CD14-positive monocyte (primary cell): ENCODE measurements at regions of chr22 and their contacts with region 1.

Region 1: GRCh38 chr22:37933711-37934376 is 19.6 kb downstream of the C22orf23 start:
- DNase-seq: peak; percentile 79 to 97 (median 91)
- H3K4me3 ChIP-seq: no peak overlapping the region
- H3K4me3 Mint-ChIP-seq: no peak overlapping the region
- H3K27ac ChIP-seq: no peak overlapping the region
- H3K27ac Mint-ChIP-seq: peak overlapping the region in 4 of 7 donors; percentile 40 to 69 (median 54)
- H3K4me1 ChIP-seq: peaks cover 6 to 8% of the 10 kb centered on the region in 2 donors
- H3K4me1 Mint-ChIP-seq: peaks cover 10% of the 10 kb centered on the region
- H3K27me3 ChIP-seq: no peaks in the 10 kb centered on the region
- H3K27me3 Mint-ChIP-seq: peaks cover 0 to 3% (median 0%) of the 10 kb centered on the region in 3 donors
- CTCF ChIP-seq: peak; percentile 94

Region 2: DNA sequence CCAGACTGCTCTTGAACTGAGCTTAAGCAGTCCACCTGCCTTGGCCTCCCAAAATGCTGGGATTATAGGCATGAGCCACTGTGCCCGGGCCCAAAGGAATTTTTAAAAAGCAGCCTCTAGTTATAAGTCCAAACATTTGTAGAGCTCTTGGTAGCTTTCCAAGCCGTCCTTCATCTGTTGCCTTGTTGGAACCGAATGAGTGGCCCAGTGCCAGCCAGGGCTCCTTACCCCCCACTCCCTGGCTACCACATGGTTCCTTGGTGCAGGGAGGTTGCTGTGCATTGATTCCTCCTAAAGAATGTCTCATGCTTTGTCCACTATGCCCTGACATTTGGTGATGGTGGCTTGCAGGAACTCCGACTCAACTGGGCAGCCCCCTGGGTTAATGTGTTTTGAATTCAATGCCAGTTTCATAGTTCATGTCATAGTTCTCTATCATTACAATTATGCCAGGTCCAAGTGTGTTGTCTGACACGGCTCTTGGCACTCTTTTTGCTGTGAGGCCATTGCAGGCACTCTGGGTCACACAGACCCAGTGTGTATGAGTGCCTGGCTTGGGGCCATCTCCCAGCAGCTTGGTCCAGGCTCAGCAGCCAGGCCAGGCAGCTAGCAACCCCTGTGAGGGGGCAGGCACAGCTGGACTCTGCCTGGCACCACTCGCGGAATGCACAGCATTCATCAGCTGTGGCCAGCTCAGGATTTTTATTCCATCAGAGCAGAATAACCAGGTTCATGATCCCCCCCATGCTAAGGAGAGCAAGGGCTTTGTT is 41.1 kb before region 1 on chr22:
- intact Hi-C with region 1: loop called in 1 of 2 experiments (anchors 5 kb)
- DNase-seq: no peak
- H3K4me3 ChIP-seq: no peak overlapping the region
- H3K4me3 Mint-ChIP-seq: no peak overlapping the region
- H3K27ac ChIP-seq: no peak overlapping the region
- H3K27ac Mint-ChIP-seq: no peak overlapping the region
- H3K4me1 ChIP-seq: peaks cover 10 to 14% of the 10 kb centered on the region in 2 donors
- H3K4me1 Mint-ChIP-seq: peaks cover 18% of the 10 kb centered on the region
- H3K27me3 ChIP-seq: no peaks in the 10 kb centered on the region
- H3K27me3 Mint-ChIP-seq: no peaks in the 10 kb centered on the region
- CTCF ChIP-seq: no peak